IMR-90 (cell line): ENCODE measurements at regions of chr4 and their contacts with region 1.

Region 1: DNA sequence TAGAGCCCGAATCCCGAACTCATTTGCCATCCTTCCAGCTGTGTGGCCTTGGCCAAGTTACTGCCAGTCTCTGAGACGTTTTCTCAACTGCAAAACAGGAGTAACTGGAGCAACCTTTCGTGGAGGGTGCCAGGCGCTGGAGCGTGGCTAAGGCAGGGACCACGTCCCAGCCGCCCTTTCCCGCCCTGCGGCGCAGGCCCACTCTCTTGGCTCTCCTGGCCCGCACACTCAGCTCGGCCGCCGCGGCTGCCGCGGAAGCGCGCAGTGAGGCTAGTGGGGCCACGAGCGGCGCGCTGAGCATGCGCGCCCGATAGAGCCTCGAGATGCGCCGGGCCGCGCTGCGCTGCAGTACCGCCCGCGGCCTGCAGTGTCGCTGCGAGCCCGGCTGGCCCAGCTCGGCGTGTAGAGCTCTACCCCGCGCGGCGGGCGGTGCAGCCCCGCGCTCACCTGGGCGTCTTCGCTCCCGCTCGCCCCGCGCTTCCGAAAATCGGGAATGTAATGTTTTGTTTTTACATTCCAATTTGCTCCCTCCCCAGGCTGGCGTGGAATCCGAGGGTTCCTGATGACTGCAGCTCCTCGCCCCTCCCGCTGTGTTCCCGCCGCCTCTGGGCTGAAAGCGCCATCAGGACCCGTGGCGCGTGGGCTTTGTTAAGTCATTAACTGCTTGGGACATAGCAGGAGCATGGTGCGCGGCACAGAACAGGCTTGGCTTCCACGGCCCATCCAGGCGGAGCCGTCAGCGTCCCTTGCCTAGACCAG is 4.0 kb upstream of the ZNF518B start:
- DNase-seq: peak; percentile 57
- ATAC-seq: peak; percentile 88
- H3K4me3 ChIP-seq: peak overlapping the region; percentile 36
- H3K27ac ChIP-seq: no peak overlapping the region
- H3K4me1 ChIP-seq: no peaks in the 10 kb centered on the region
- H3K27me3 ChIP-seq: peaks cover 13% of the 10 kb centered on the region
- CTCF ChIP-seq: peak; percentile 85
- POLR2A ChIP-seq: no peak
- RAD21 ChIP-seq: peak; percentile 60

Region 2: GRCh38 chr4:10478621-10479020 is 17.4 kb after region 1 on chr4:
- CTCF ChIA-PET with region 1: interaction called, 10 read pairs
- POLR2A ChIA-PET with region 1: no interaction called
- dilution Hi-C with region 1: no loop called
- in situ Hi-C with region 1: no loop called
- intact Hi-C with region 1: no loop called
- DNase-seq: no peak
- ATAC-seq: no peak
- H3K4me3 ChIP-seq: no peak overlapping the region
- H3K27ac ChIP-seq: no peak overlapping the region
- H3K4me1 ChIP-seq: no peaks in the 10 kb centered on the region
- H3K27me3 ChIP-seq: no peaks in the 10 kb centered on the region
- CTCF ChIP-seq: no peak
- POLR2A ChIP-seq: no peak
- RAD21 ChIP-seq: no peak

Region 3: DNA sequence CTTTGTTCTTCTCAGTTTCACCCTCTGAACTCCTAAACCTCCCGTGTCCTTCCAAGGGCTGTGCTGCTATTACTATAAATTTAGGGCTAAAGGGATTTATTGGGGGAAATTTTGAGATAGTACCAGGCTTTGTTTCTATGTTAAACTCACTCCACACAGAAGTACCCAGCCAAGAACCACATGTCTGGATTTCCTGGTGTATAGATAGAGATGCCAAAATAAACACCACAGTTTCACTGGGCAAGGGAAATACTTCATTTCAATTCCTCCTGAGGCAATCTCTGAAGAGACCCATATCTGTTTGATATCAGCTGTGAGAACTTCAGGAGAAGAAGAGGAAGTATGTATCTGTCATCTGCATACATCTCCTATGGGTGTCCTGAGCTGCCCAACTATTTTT is 245.0 kb after region 1 on chr4:
- CTCF ChIA-PET with region 1: no interaction called
- POLR2A ChIA-PET with region 1: no interaction called
- dilution Hi-C with region 1: no loop called
- in situ Hi-C with region 1: no loop called
- intact Hi-C with region 1: no loop called
- DNase-seq: peak; percentile 23
- ATAC-seq: no peak
- H3K4me3 ChIP-seq: no peak overlapping the region
- H3K27ac ChIP-seq: no peak overlapping the region
- H3K4me1 ChIP-seq: peaks cover 10% of the 10 kb centered on the region
- H3K27me3 ChIP-seq: no peaks in the 10 kb centered on the region
- CTCF ChIP-seq: no peak
- POLR2A ChIP-seq: no peak
- RAD21 ChIP-seq: no peak